Heart left ventricle (tissue), 16 donors: ENCODE measurements at regions of chr1 and their contacts with region 1.

Region 1: GRCh38 chr1:210448297-210448892 is 119.7 kb downstream of the HHAT start:
- DNase-seq: no peak
- ATAC-seq: peak in 2 of 4 donors; percentile 53 to 63
- H3K4me3 ChIP-seq: no peak overlapping the region
- H3K27ac ChIP-seq: no peak overlapping the region
- H3K4me1 ChIP-seq: no peaks in the 10 kb centered on the region
- H3K27me3 ChIP-seq: no peaks in the 10 kb centered on the region
- CTCF ChIP-seq: peak; percentile 36 to 68 (median 56)
- POLR2A ChIP-seq: no peak

Region 2: DNA sequence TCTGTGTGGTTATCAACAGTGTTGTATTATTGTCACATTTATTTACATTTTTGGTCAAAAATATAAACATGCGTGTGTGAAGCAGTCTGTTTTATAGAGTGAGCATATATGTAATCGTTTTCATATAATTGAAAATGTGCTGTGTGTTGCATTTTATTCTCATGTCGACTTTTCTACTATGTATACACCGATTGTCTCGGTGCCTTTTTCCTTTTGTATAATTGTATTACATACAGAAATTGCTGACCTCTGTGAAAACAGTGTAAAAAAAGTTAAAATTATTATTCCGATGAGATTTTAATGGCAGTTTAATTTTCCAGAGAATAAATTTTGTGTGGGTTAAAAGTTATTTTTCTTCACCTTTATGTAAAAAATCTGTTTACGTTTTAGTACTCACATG is 278.2 kb before region 1 on chr1:
- intact Hi-C with region 1: no loop called
- DNase-seq: no peak
- ATAC-seq: no peak
- H3K4me3 ChIP-seq: no peak overlapping the region
- H3K27ac ChIP-seq: no peak overlapping the region
- H3K4me1 ChIP-seq: no peaks in the 10 kb centered on the region
- H3K27me3 ChIP-seq: peaks cover 0 to 10% (median 0%) of the 10 kb centered on the region in 9 donors
- CTCF ChIP-seq: no peak
- POLR2A ChIP-seq: no peak

Region 3: GRCh38 chr1:210496063-210496462 is 47.7 kb after region 1 on chr1:
- intact Hi-C with region 1: no loop called
- DNase-seq: peak in 4 of 5 donors; percentile 15 to 40 (median 28)
- ATAC-seq: peak in 3 of 4 donors; percentile 56 to 86 (median 63)
- H3K4me3 ChIP-seq: no peak overlapping the region
- H3K27ac ChIP-seq: no peak overlapping the region
- H3K4me1 ChIP-seq: no peaks in the 10 kb centered on the region
- H3K27me3 ChIP-seq: no peaks in the 10 kb centered on the region
- CTCF ChIP-seq: no peak
- POLR2A ChIP-seq: no peak

Region 4: GRCh38 chr1:210700511-210700910 is 252.1 kb after region 1 on chr1:
- intact Hi-C with region 1: loop called in 1 of 10 experiments (anchors 5 kb)
- DNase-seq: no peak
- ATAC-seq: no peak
- H3K4me3 ChIP-seq: no peak overlapping the region
- H3K27ac ChIP-seq: no peak overlapping the region
- H3K4me1 ChIP-seq: no peaks in the 10 kb centered on the region
- H3K27me3 ChIP-seq: peaks cover 0 to 4% (median 0%) of the 10 kb centered on the region in 9 donors
- CTCF ChIP-seq: no peak
- POLR2A ChIP-seq: no peak